AG04449 (cell line): ENCODE measurements at regions of chr19 and their contacts with region 1.

Region 1: DNA sequence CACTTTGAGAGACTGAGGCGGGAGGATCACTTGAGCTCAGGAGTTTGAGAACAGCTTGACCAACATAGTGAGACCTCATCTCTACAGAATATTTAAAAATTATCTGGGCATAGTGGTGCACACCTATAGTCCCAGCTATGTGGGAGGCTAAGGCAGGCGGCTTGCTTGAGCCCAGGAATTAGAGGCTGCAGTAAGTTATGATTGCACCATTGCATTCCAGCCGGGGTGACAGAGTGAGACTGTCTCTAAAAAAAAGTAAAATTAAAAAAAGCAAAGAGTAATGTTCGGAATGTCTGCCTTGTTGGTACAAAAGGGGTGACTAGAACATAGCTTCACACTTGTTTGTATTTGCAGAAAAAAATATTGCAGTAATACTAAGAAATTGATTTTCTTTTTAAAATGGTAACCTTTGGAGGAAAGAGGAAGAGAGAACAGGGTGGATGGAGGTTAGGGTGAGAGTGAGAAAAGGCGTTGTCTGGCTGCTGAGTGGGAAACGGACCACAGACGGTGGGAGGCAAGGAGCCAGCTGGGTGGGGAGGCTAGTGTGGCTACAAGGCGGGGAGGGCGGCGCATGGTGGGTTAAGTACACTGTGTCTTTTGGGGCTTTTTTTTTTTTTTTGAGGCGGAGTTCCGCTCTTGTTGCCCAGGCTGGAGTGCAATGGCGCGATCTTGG is 10.2 kb downstream of the PPP1R14A start:
- DNase-seq: no peak
- H3K4me3 ChIP-seq: no peak overlapping the region
- CTCF ChIP-seq: no peak

Region 2: GRCh38 chr19:38155453-38155852 is 90.5 kb before region 1 on chr19:
- CTCF ChIA-PET with region 1: no interaction called
- POLR2A ChIA-PET with region 1: no interaction called
- DNase-seq: no peak
- H3K4me3 ChIP-seq: no peak overlapping the region
- CTCF ChIP-seq: no peak

Region 3: DNA sequence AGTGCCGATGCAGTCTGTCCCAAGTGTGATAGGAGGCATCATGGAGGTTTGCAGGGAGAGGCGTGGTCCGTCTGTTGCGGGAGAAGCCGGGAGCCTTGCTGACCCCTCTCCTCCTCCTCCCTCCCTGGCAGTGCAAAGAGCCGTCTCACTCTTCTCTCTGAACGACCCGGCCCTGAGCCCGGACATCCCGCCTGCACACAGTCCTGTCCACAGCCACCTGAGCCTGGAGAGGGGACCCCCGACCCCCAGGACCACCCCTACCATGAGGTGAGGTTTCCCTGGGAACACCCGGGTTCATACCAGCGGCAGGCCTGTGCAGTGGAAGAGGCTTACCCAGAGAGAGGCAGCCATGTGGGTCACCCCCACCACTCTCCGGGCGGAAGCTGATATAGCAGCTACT is 44.2 kb before region 1 on chr19:
- CTCF ChIA-PET with region 1: no interaction called
- POLR2A ChIA-PET with region 1: no interaction called
- DNase-seq: no peak
- H3K4me3 ChIP-seq: no peak overlapping the region
- CTCF ChIP-seq: no peak

Region 4: DNA sequence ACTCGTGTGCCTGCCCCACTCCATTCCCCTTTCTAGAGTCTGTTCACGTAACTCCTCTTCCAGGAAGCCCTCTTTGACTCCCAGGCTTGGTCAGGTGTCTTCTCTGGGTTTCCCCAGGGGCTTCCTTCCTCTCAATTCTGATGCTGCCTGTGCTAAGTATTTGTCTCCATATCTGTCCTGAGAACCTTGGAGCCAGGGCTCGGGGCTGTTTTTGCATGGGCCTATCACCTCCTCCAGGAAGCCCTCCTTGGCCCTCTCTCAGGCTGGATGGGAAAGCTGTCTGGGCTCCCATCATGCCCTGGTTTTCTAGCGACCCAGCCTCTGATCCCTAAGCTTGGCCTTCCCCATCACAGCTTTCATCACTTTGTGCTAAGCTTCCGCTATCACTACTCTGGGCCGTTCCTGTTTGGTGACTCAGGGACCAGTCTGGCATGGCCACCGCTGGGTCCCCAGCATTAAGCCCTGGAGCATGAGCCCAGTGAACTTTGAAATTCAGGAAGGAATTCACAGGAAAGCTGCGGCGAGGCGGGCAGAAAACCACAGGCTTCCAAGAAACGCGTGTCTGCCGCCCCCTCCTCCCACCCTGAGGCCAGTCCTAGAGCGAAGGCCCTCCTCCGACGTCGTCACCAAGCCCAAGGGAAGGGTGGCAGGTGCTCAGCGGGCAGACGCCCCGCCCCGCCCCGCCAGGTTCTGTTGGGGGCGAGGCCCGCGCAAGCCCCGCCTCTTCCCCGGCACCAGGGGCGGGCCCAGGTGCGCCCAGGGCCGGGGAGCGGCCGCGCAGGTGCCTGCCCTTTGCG is 17.9 kb after region 1 on chr19:
- CTCF ChIA-PET with region 1: interaction called, 25 read pairs
- POLR2A ChIA-PET with region 1: no interaction called
- DNase-seq: no peak
- H3K4me3 ChIP-seq: peak overlapping the region; percentile 52
- CTCF ChIP-seq: no peak

Region 5: DNA sequence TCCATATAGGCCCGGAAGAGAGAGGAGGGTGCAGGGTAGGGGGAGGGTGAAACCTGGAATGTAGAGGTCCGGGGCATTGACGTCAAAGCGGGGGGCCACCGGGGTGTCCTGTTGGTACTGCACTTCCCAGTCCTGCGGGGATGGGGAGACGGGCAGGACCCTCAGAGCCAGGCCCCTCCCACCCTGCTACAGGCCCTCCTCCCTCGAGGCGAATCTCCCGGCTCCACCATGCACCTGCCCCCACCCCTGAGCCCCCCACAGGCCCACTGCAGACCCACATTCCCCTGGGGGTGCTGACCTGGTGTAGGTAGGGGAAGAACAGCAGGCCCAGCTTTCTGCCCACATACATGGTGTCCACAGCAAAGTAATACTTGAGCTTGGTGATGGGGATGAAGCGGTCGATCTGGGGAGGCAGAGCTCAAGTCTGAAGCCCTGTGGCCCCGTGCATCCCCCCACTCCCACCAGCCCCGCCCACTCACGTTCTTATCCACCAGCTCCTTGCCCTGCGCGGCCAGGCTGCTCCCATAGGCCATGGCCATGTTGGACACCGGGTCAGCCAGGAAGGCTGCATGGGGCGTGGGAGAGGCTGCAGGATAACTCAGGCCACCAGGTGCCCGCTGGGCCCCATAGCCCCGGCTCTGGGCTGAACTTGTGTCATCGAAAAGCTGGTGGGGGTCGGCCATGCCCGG is 63.1 kb after region 1 on chr19:
- CTCF ChIA-PET with region 1: interaction called, 10 read pairs
- POLR2A ChIA-PET with region 1: no interaction called
- DNase-seq: no peak
- H3K4me3 ChIP-seq: no peak overlapping the region
- CTCF ChIP-seq: no peak

Region 6: DNA sequence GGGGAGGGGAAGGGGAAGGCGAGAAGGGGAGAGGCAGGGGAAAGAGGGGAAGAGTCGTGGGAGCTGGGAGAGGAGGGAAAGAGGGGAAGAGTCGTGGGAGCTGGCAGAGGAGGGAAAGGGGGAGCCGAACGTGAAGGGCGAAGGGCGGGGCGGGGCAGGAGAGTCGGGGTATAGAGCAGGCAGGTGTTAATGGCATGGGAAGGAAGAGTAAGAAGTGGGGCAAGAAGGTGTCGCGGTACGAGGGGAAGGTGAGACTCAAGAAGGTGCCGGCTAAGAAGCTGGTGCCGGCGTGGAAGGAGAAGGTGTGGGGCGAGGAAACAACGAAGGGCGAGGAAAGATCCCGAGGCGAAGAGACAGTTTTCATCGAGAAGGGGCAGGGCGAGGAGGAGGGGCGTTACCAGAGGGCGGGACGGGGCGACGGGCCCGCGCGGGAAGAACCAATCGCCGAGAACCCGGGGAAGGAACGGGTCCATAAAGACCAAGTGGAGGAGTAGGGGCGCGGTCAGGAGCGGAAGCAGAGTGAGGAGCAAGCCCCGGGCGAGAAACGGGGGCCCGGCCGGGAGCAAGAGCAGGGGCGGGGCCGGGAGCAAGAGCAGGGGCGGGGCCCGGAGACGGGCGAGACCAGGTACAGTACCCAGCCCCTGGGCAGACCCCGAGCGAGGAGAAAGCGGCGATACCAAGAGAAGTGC is 90.1 kb after region 1 on chr19:
- CTCF ChIA-PET with region 1: interaction called, 298 read pairs
- POLR2A ChIA-PET with region 1: interaction called, 6 read pairs
- DNase-seq: peak; percentile 44
- H3K4me3 ChIP-seq: peak overlapping the region; percentile 89
- CTCF ChIP-seq: no peak

Region 7: DNA sequence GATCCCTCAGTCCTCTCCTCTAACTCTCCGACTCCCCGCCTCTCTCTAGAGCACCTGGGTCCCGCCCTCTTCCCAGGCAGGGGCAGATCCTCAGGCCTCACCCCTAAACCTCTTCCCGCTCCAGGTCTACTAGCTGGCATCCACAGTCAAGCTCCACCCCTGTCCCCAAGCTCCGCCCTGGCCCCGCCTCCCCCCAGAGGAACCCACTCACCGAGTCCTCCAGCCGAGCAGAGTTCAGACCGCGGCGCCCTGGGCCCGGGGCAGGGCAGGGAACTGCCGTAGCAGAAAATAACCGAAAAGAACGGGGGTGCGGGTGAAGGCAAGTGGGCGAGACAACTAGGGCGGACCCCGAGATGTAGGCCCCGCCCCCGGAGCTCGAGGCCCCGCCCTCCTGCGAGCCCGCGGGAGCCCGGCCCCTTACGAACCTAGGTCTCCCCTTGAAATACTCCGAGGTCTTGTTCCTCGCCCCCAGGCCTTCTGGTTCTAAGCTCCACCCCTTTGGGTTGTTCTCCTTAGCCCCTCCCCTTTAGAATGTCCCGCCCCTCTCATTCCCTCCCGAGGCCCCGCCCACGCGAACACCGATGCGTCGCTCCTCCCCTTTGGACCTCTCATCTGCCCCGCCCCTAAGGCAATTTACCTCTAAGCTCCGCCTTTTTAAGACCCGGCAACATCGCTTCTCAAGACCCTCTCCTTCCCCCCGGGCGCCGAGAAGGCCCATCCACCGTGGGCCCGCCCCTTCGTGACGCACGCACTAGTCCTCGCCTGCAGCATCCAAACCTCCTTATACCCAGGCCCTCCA is 141.8 kb after region 1 on chr19 and contains the start of gene GGN:
- CTCF ChIA-PET with region 1: interaction called, 18 read pairs
- POLR2A ChIA-PET with region 1: no interaction called
- DNase-seq: peak; percentile 75
- H3K4me3 ChIP-seq: peak within 1 kb of the TSS; percentile 75
- CTCF ChIP-seq: no peak

Region 8: GRCh38 chr19:38544034-38544958 is 298.3 kb after region 1 on chr19:
- CTCF ChIA-PET with region 1: no interaction called
- POLR2A ChIA-PET with region 1: no interaction called
- DNase-seq: peak; percentile 12
- H3K4me3 ChIP-seq: no peak overlapping the region
- CTCF ChIP-seq: peak; percentile 15